ENCODE measurements at regions of chr22 and their contacts with region 1.

Region 1: GRCh38 chr22:43230971-43231723 is 44.2 kb upstream of the TTLL12 start:
- DNase-seq: peak; percentile 43 to 78 (median 50)
- ATAC-seq: peak in 3 of 4 donors; percentile 18 to 39 (median 29)
- H3K4me3 ChIP-seq: no peak overlapping the region
- H3K27ac ChIP-seq: no peak overlapping the region
- H3K4me1 ChIP-seq: peaks cover 0 to 13% (median 1%) of the 10 kb centered on the region in 12 donors
- H3K27me3 ChIP-seq: peaks cover 0 to 10% (median 0%) of the 10 kb centered on the region in 9 donors
- CTCF ChIP-seq: peak; percentile 80 to 95 (median 90)
- POLR2A ChIP-seq: no peak

Region 2: DNA sequence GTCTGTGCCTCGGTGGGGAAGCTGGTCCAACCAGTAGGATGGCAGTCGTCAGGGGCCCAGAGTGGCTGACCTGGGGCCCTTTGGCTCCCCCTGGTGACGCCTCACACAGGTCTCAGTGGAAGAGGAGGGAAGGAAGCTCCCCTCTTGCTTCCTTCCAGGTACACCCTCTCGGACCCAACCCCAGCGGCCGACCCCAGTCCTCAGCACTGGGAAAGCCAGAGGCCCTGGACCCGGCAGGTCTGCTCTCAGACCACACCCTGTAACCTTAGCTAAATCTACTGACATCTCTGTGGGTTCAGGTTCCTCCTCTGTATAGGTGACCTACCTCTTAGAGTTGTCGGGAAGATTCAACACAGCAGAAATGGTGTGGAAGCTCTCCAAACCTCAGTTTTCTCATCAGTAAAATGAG is 115.4 kb after region 1 on chr22:
- intact Hi-C with region 1: loop called in 8 of 10 experiments (anchors 2 to 10 kb)
- DNase-seq: peak in 4 of 5 donors; percentile 41 to 80 (median 60)
- ATAC-seq: peak; percentile 65 to 85 (median 71)
- H3K4me3 ChIP-seq: no peak overlapping the region
- H3K27ac ChIP-seq: no peak overlapping the region
- H3K4me1 ChIP-seq: peaks cover 0 to 21% (median 0%) of the 10 kb centered on the region in 12 donors
- H3K27me3 ChIP-seq: peaks cover 22 to 80% (median 43%) of the 10 kb centered on the region in 9 donors
- CTCF ChIP-seq: peak; percentile 61 to 88 (median 72)
- POLR2A ChIP-seq: no peak